Panc1 (cell line): ENCODE measurements at regions of chr1 and their contacts with region 1.

Region 1: GRCh38 chr1:55490547-55490946 is 275.4 kb upstream of the USP24 start:
- DNase-seq: no peak
- ATAC-seq: no peak
- H3K4me3 ChIP-seq: no peak overlapping the region
- H3K27ac ChIP-seq: no peak overlapping the region
- H3K4me1 ChIP-seq: no peaks in the 10 kb centered on the region
- H3K27me3 ChIP-seq: no peaks in the 10 kb centered on the region
- CTCF ChIP-seq: no peak

Region 2: GRCh38 chr1:55478742-55479141 is 11.8 kb before region 1 on chr1:
- CTCF ChIA-PET with region 1: no interaction called
- POLR2A ChIA-PET with region 1: interaction called, 16 read pairs
- in situ Hi-C with region 1: no loop called
- intact Hi-C with region 1: no loop called
- DNase-seq: no peak
- ATAC-seq: peak; percentile 51; the same call in 1 of the 2 replicates
- H3K4me3 ChIP-seq: no peak overlapping the region
- H3K27ac ChIP-seq: no peak overlapping the region
- H3K4me1 ChIP-seq: no peaks in the 10 kb centered on the region
- H3K27me3 ChIP-seq: no peaks in the 10 kb centered on the region
- CTCF ChIP-seq: peak; percentile 44; the same call in 1 of the 2 replicates

Region 3: DNA sequence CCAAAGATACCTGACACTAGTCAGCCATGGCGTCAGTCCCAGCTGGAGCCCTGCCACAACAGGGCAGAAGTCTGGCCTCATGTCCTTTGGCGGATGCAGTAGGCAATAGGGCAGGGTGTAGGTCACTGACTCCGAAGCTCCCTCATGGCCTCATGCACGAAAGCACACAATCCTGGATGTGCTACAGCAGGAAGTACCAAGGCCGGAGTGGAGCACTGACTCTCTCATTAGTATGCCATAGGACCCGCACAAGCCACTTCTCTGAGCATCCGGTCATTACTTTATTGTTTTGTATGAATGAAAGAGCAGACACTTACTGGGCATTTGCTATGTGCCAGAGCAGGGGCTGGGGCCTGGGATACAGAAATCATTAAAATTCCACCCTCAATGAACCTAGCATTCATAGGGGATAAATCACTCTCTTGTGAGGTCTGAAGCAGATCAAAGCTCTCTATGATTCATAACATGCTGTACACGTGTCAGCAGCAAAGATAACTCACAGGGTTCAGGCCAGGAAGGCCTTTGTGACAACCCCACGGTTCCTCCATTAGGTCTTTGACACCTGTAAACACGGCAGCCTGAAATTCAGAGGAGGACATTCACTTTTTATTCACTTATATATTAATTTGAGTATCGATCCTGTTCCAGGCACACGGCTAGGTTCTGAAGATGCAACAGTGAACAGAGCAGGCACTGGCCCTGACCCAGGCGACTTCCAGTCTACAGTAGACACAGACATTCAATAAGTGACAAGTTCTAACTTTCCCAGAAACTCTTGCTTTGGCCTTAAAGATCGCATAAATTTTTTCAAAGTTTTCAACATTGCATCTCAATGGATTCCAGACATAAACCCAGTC is 82.6 kb after region 1 on chr1:
- CTCF ChIA-PET with region 1: no interaction called
- POLR2A ChIA-PET with region 1: no interaction called
- in situ Hi-C with region 1: no loop called
- intact Hi-C with region 1: no loop called
- DNase-seq: no peak
- ATAC-seq: no peak
- H3K4me3 ChIP-seq: no peak overlapping the region
- H3K27ac ChIP-seq: no peak overlapping the region
- H3K4me1 ChIP-seq: no peaks in the 10 kb centered on the region
- H3K27me3 ChIP-seq: no peaks in the 10 kb centered on the region
- CTCF ChIP-seq: no peak

Region 4: GRCh38 chr1:55839626-55840025 is 349.1 kb after region 1 on chr1:
- CTCF ChIA-PET with region 1: no interaction called
- POLR2A ChIA-PET with region 1: interaction called, 11 read pairs
- in situ Hi-C with region 1: no loop called
- intact Hi-C with region 1: no loop called
- DNase-seq: no peak
- ATAC-seq: no peak
- H3K4me3 ChIP-seq: no peak overlapping the region
- H3K27ac ChIP-seq: no peak overlapping the region
- H3K4me1 ChIP-seq: no peaks in the 10 kb centered on the region
- H3K27me3 ChIP-seq: no peaks in the 10 kb centered on the region
- CTCF ChIP-seq: no peak